PC-3 (cell line): ENCODE measurements at regions of chr2 and their contacts with region 1.

Region 1: GRCh38 chr2:150624001-150624401 is 136.5 kb upstream of the RND3 start:
- DNase-seq: peak; percentile 50
- ATAC-seq: no peak
- H3K4me3 ChIP-seq: no peak overlapping the region
- H3K27ac ChIP-seq: peak overlapping the region; percentile 11; the same call in 1 of the 2 replicates
- H3K4me1 ChIP-seq: peaks cover 48% of the 10 kb centered on the region
- H3K27me3 ChIP-seq: no peaks in the 10 kb centered on the region
- CTCF ChIP-seq: no peak

Region 2: DNA sequence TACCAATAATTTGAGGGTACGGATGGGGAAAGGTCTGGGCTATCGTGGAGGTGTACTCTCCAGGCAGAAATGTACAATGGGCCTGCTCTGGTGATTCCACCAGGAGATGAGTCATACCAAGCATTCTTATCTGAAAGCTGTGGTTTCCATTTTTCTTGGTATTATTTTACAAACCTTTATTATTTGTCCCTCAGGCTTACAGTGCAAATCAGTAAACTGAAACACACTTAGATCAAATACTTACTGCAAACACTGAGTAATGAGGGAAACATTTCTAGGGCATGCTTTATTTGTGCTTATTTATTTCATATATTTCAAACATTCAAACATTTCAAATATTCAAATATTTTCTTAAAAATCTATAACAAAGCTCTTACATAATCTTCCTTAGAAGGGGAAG is 456.3 kb before region 1 on chr2:
- CTCF ChIA-PET with region 1: no interaction called
- POLR2A ChIA-PET with region 1: no interaction called
- intact Hi-C with region 1: loop called (anchors 2 kb)
- DNase-seq: peak; percentile 95
- ATAC-seq: peak; percentile 71
- H3K4me3 ChIP-seq: no peak overlapping the region; the same call in 1 of the 2 replicates
- H3K27ac ChIP-seq: peak overlapping the region; percentile 96
- H3K4me1 ChIP-seq: peaks cover 52% of the 10 kb centered on the region
- H3K27me3 ChIP-seq: no peaks in the 10 kb centered on the region
- CTCF ChIP-seq: no peak

Region 3: DNA sequence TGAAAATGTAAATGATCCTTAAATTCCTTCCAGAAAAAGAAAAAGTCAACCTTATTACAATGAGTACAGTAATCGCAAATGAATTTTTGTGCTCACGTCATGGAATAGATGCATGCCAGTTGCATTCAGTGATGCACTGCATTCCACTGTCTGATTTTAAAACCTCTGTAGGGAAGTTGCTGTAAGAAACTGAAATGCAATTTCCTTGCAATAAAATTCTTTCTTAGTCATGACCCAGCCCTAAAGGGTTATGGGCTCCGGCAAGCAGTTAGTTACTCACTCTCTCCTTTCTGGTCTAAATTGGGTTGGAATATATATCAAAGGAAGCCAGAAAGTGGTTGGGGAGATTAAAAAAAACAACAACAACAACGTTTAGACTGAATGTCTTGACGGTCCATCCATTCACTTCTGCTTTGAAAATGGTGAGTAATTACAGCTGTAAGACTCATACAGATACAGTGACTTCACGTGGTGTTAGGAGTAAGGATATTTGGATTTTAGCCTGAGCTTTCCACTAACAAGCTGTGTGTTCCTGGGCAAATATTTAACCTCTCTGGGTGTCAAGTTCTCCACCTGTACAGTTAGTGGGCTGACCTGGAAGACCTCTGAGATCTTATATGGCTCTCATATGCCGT is 127.9 kb before region 1 on chr2:
- CTCF ChIA-PET with region 1: no interaction called
- POLR2A ChIA-PET with region 1: no interaction called
- intact Hi-C with region 1: loop called (anchors 1 kb)
- DNase-seq: peak; percentile 96
- ATAC-seq: peak; percentile 87
- H3K4me3 ChIP-seq: peak overlapping the region; percentile 14; the same call in 1 of the 2 replicates
- H3K27ac ChIP-seq: peak overlapping the region; percentile 81
- H3K4me1 ChIP-seq: peaks cover 38% of the 10 kb centered on the region
- H3K27me3 ChIP-seq: no peaks in the 10 kb centered on the region
- CTCF ChIP-seq: no peak

Region 4: GRCh38 chr2:150538651-150539201 is 85.3 kb before region 1 on chr2:
- CTCF ChIA-PET with region 1: no interaction called
- POLR2A ChIA-PET with region 1: no interaction called
- intact Hi-C with region 1: no loop called
- DNase-seq: no peak
- ATAC-seq: no peak
- H3K4me3 ChIP-seq: no peak overlapping the region
- H3K27ac ChIP-seq: no peak overlapping the region
- H3K4me1 ChIP-seq: no peaks in the 10 kb centered on the region
- H3K27me3 ChIP-seq: no peaks in the 10 kb centered on the region
- CTCF ChIP-seq: no peak

Region 5: DNA sequence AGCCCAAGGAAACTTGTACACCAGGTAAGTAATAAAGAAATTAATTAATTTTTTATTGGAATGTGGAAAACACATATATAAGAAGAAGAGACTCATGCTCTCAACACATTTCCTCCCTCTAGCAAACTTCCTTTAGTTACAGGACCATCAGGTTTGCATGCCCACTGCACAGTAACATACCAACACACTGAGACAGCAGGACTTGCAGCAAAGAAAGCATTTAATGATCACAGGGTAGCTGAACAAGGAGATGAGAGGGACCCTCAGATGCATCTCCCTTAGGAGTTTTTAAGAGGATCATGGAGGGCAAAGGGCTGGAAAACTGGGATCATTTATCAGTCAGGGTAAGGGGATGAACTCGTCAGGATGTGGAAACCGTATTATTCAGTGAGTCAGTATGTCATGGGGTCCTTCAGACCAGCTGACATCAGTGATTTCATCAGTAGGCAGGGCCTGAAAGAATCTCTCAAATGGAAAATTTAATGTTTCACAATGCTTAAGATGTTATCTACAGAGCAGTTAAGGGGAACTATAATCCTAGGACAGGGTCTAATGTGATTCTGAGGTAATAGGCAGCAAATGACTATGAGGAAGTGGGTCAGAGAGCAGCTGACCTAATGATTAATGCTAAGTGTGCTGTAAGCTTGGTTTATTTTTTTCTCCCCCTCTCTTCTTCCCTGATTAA is 57.3 kb after region 1 on chr2:
- CTCF ChIA-PET with region 1: no interaction called
- POLR2A ChIA-PET with region 1: no interaction called
- intact Hi-C with region 1: loop called (anchors 1 kb)
- DNase-seq: peak; percentile 86
- ATAC-seq: peak; percentile 79
- H3K4me3 ChIP-seq: no peak overlapping the region
- H3K27ac ChIP-seq: peak overlapping the region; percentile 93
- H3K4me1 ChIP-seq: peaks cover 45% of the 10 kb centered on the region
- H3K27me3 ChIP-seq: no peaks in the 10 kb centered on the region
- CTCF ChIP-seq: no peak

Region 6: GRCh38 chr2:150931451-150931850 is 307.4 kb after region 1 on chr2:
- CTCF ChIA-PET with region 1: no interaction called
- POLR2A ChIA-PET with region 1: no interaction called
- intact Hi-C with region 1: loop called (anchors 5 kb)
- DNase-seq: no peak
- ATAC-seq: no peak
- H3K4me3 ChIP-seq: no peak overlapping the region
- H3K27ac ChIP-seq: no peak overlapping the region
- H3K4me1 ChIP-seq: peaks cover 4% of the 10 kb centered on the region; the same call in 1 of the 2 replicates
- H3K27me3 ChIP-seq: no peaks in the 10 kb centered on the region
- CTCF ChIP-seq: no peak

Region 7: GRCh38 chr2:151051574-151052220 is 427.7 kb after region 1 on chr2:
- CTCF ChIA-PET with region 1: no interaction called
- POLR2A ChIA-PET with region 1: no interaction called
- intact Hi-C with region 1: loop called (anchors 10 kb)
- DNase-seq: peak; percentile 80
- ATAC-seq: peak; percentile 27
- H3K4me3 ChIP-seq: no peak overlapping the region
- H3K27ac ChIP-seq: no peak overlapping the region
- H3K4me1 ChIP-seq: peaks cover 46% of the 10 kb centered on the region
- H3K27me3 ChIP-seq: no peaks in the 10 kb centered on the region
- CTCF ChIP-seq: peak; percentile 94

Region 8: GRCh38 chr2:151238527-151239487 is 614.8 kb after region 1 on chr2:
- CTCF ChIA-PET with region 1: no interaction called
- POLR2A ChIA-PET with region 1: no interaction called
- intact Hi-C with region 1: loop called (anchors 2 kb)
- DNase-seq: peak; percentile 86
- ATAC-seq: peak; percentile 52
- H3K4me3 ChIP-seq: no peak overlapping the region
- H3K27ac ChIP-seq: peak overlapping the region; percentile 7
- H3K4me1 ChIP-seq: peaks cover 27% of the 10 kb centered on the region
- H3K27me3 ChIP-seq: no peaks in the 10 kb centered on the region
- CTCF ChIP-seq: peak; percentile 91